CD8-positive, alpha-beta memory T cell (primary cell): ENCODE measurements at regions of chr13 and their contacts with region 1.

Region 1: DNA sequence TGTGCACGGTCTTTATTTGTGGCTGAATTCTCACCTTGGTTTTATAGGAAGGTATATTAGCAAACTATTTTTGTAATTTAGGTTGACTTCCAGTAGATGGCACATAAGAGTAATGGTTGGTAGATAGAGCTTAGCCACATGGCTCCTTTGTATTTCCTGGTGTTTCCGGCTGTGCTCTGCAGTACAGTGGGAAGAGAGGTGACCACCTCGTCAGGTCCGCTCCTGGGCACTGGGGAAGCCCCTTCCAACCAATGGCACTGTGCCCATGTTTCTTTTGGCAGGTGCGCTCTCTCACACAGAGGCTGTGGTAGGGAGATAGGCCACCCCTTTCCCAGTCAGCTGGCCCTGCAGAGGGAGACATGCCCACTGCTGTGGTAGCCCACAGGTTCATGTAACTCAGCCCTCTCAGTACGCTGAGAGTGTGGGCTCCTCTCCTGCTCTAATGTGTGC is 74.3 kb upstream of the ATP12A start:
- DNase-seq: peak in 3 of 5 donors; percentile 34 to 56 (median 35)
- H3K4me3 ChIP-seq: no peak overlapping the region
- H3K4me3 Mint-ChIP-seq: peak overlapping the region in 1 of 7 donors; percentile 68
- H3K27ac ChIP-seq: no peak overlapping the region
- H3K27ac Mint-ChIP-seq: peak overlapping the region in 2 of 8 donors; percentile 38 to 78
- H3K4me1 ChIP-seq: no peaks in the 10 kb centered on the region
- H3K4me1 Mint-ChIP-seq: peaks cover 11 to 21% (median 17%) of the 10 kb centered on the region in 3 donors
- H3K27me3 ChIP-seq: no peaks in the 10 kb centered on the region
- H3K27me3 Mint-ChIP-seq: no peaks in the 10 kb centered on the region

Region 2: GRCh38 chr13:23888658-23889614 is 717.0 kb before region 1 on chr13 and contains the start of gene MIPEP:
- CTCF ChIA-PET with region 1: no interaction called
- POLR2A ChIA-PET with region 1: no interaction called
- DNase-seq: peak; percentile 78 to 90 (median 84)
- H3K4me3 ChIP-seq: peak within 1 kb of the TSS; percentile 90
- H3K4me3 Mint-ChIP-seq: peak within 1 kb of the TSS; percentile 85 to 95 (median 90)
- H3K27ac ChIP-seq: peak within 1 kb of the TSS; percentile 54
- H3K27ac Mint-ChIP-seq: peak within 1 kb of the TSS; percentile 68 to 94 (median 82)
- H3K4me1 ChIP-seq: peaks cover 9% of the 10 kb centered on the region
- H3K4me1 Mint-ChIP-seq: peaks cover 23 to 29% (median 26%) of the 10 kb centered on the region in 3 donors
- H3K27me3 ChIP-seq: no peaks in the 10 kb centered on the region
- H3K27me3 Mint-ChIP-seq: peaks cover 0 to 2% of the 10 kb centered on the region in 2 donors
- total RNA-seq, gene MIPEP: 18.8 to 23.7 TPM

Region 3: DNA sequence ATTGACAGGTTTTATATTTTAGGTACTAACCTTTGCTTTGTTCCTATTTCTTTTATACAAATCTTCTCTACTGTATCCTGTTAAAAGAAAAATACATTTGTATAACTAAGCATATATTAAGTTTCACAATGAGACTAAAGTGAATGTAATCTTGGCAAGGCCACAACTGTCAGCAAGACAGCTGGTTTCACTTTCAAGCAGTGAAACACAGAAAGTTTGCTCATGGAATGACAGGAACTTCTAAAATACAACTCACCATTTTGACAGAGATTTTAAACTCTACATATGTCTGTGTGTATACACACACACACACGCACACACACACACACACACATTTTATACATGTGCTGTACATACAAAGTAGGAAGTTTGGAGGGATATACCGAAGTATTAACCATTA is 146.7 kb before region 1 on chr13:
- CTCF ChIA-PET with region 1: no interaction called
- POLR2A ChIA-PET with region 1: no interaction called
- DNase-seq: no peak
- H3K4me3 ChIP-seq: no peak overlapping the region
- H3K4me3 Mint-ChIP-seq: no peak overlapping the region
- H3K27ac ChIP-seq: no peak overlapping the region
- H3K27ac Mint-ChIP-seq: peak overlapping the region in 5 of 8 donors; percentile 28 to 82 (median 55)
- H3K4me1 ChIP-seq: no peaks in the 10 kb centered on the region
- H3K4me1 Mint-ChIP-seq: peaks cover 26 to 31% (median 28%) of the 10 kb centered on the region in 3 donors
- H3K27me3 ChIP-seq: no peaks in the 10 kb centered on the region
- H3K27me3 Mint-ChIP-seq: no peaks in the 10 kb centered on the region

Region 4: GRCh38 chr13:24618014-24618955 is 12.3 kb after region 1 on chr13:
- CTCF ChIA-PET with region 1: interaction called, 12 read pairs
- POLR2A ChIA-PET with region 1: interaction called, 5 read pairs
- DNase-seq: peak; percentile 66 to 89 (median 70)
- H3K4me3 ChIP-seq: peak overlapping the region; percentile 6
- H3K4me3 Mint-ChIP-seq: peak overlapping the region; percentile 3 to 78 (median 71)
- H3K27ac ChIP-seq: peak overlapping the region; percentile 59
- H3K27ac Mint-ChIP-seq: peak overlapping the region; percentile 86 to 99 (median 97)
- H3K4me1 ChIP-seq: peaks cover 35% of the 10 kb centered on the region
- H3K4me1 Mint-ChIP-seq: peaks cover 45 to 70% (median 57%) of the 10 kb centered on the region in 3 donors
- H3K27me3 ChIP-seq: no peaks in the 10 kb centered on the region
- H3K27me3 Mint-ChIP-seq: no peaks in the 10 kb centered on the region

Region 5: DNA sequence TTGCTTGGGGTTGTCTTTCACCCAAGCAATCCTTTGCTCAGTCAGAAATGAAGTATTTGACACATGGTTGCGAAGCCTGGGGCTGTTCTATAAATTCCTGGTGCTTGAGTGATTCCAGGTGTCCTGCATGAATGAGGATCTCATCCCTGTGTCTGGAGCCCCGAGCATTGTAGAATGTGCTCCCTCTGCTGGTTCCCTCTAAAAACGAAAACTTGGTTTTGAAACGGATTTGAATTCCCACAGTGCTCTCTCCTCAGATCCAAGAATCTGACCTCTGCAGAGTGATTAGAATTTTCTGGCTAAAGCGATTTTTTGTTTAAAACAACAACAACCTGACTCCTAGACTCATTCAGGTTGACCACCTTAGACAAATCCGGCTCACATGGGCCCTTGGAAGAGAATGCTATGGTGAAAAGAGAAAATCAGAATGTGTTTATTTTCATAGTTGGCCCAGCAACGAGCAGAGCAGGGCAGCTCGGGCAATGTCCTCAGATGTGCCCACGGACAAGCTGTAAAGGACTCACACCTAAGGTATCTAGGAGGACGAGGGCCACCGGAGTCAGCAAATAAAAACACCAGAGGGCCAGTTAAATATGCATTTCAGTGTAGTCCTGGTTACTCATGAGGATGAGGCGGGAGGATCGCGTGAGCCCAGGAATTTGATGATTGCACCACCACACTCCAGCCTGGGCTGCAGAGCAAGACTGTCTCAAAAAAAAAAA is 65.6 kb after region 1 on chr13:
- CTCF ChIA-PET with region 1: interaction called, 13 read pairs
- POLR2A ChIA-PET with region 1: no interaction called
- DNase-seq: peak in 1 of 5 donors; percentile 17
- H3K4me3 ChIP-seq: no peak overlapping the region
- H3K4me3 Mint-ChIP-seq: no peak overlapping the region
- H3K27ac ChIP-seq: no peak overlapping the region
- H3K27ac Mint-ChIP-seq: peak overlapping the region in 1 of 8 donors; percentile 19
- H3K4me1 ChIP-seq: peaks cover 8% of the 10 kb centered on the region
- H3K4me1 Mint-ChIP-seq: peaks cover 4 to 11% (median 10%) of the 10 kb centered on the region in 3 donors
- H3K27me3 ChIP-seq: peaks cover 9% of the 10 kb centered on the region
- H3K27me3 Mint-ChIP-seq: peaks cover 8 to 27% of the 10 kb centered on the region in 2 donors